ENCODE measurements at regions of chr17 and their contacts with region 1.

Region 1: GRCh38 chr17:38982858-38983746 is 15.9 kb upstream of the FBXO47 start:
- DNase-seq: peak in 1 of 2 donors; percentile 71
- H3K4me3 ChIP-seq: no peak overlapping the region
- H3K27ac ChIP-seq: no peak overlapping the region
- H3K4me1 ChIP-seq: peaks cover 0 to 5% of the 10 kb centered on the region in 2 donors
- H3K27me3 ChIP-seq: no peaks in the 10 kb centered on the region
- CTCF ChIP-seq: peak; percentile 70 to 79 (median 73)

Region 2: GRCh38 chr17:38799378-38800236 is 183.5 kb before region 1 on chr17 and contains the start of gene PIP4K2B:
- intact Hi-C with region 1: no loop called
- DNase-seq: peak; percentile 85 to 98
- H3K4me3 ChIP-seq: peak within 1 kb of the TSS; percentile 88 to 93
- H3K27ac ChIP-seq: peak within 1 kb of the TSS; percentile 98 to 100
- H3K4me1 ChIP-seq: peaks cover 7 to 25% of the 10 kb centered on the region in 2 donors
- H3K27me3 ChIP-seq: no peaks in the 10 kb centered on the region
- CTCF ChIP-seq: no peak
- total RNA-seq, gene PIP4K2B: 45.0 TPM

Region 3: DNA sequence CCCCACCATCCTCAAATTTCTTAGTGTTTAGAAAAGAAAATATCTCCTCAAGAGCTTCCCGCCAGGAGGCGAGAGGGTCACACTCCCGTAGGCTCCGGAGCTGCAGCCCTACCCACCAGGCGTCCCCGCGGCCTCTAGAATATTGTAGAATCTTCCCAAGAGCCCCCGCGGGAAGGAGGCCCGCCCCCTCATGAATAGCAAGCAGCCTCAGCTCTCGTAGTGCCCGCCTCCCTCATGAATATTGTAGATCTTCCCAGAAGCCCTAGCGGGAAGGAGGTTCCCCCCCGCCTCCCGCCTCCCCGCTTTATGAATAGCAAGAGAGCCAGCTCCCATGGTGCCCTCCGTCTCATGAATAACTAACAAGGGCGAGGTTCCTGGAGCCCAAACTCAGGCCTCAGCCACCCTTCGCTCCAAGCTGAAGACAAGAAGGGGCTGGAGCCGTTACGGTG is 15.8 kb before region 1 on chr17 and contains the start of gene FBXO47:
- intact Hi-C with region 1: no loop called
- DNase-seq: peak; percentile 80 to 94
- H3K4me3 ChIP-seq: peak within 1 kb of the TSS in 1 of 2 donors; percentile 47
- H3K27ac ChIP-seq: peak within 1 kb of the TSS; percentile 46 to 56
- H3K4me1 ChIP-seq: peaks cover 0 to 3% of the 10 kb centered on the region in 2 donors
- H3K27me3 ChIP-seq: no peaks in the 10 kb centered on the region
- CTCF ChIP-seq: peak in 1 of 3 experiments; percentile 21
- total RNA-seq, gene FBXO47: not detected

Region 4: DNA sequence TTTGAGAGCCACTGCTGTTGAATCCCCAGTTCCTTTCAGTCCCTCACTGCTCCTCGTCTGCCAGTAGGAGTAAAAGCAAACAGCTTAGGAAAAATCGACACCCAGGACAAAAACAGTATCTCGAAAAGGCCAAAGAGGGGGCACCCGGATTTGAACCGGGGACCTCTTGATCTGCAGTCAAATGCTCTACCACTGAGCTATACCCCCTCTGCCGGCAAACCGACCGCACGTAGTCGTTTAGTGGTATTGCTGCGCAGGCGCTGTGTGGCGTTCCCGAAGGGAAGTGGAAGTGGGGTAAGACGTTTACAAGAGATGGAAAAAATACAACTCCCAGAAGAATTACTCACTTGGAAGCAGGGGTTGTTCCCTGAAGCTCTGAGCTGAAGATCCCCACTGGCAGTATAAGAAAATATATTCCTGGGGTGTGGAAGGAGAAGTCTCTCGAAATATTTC is 170.5 kb after region 1 on chr17:
- intact Hi-C with region 1: loop called (anchors 1 kb)
- DNase-seq: peak; percentile 90 to 98
- H3K4me3 ChIP-seq: peak overlapping the region; percentile 85 to 94
- H3K27ac ChIP-seq: peak overlapping the region; percentile 84 to 94
- H3K4me1 ChIP-seq: peaks cover 12 to 15% of the 10 kb centered on the region in 2 donors
- H3K27me3 ChIP-seq: no peaks in the 10 kb centered on the region
- CTCF ChIP-seq: peak in 2 of 3 experiments; percentile 16 to 33